CD8-positive, alpha-beta T cell (primary cell): ENCODE measurements at regions of chr11 and their contacts with region 1.

Region 1: DNA sequence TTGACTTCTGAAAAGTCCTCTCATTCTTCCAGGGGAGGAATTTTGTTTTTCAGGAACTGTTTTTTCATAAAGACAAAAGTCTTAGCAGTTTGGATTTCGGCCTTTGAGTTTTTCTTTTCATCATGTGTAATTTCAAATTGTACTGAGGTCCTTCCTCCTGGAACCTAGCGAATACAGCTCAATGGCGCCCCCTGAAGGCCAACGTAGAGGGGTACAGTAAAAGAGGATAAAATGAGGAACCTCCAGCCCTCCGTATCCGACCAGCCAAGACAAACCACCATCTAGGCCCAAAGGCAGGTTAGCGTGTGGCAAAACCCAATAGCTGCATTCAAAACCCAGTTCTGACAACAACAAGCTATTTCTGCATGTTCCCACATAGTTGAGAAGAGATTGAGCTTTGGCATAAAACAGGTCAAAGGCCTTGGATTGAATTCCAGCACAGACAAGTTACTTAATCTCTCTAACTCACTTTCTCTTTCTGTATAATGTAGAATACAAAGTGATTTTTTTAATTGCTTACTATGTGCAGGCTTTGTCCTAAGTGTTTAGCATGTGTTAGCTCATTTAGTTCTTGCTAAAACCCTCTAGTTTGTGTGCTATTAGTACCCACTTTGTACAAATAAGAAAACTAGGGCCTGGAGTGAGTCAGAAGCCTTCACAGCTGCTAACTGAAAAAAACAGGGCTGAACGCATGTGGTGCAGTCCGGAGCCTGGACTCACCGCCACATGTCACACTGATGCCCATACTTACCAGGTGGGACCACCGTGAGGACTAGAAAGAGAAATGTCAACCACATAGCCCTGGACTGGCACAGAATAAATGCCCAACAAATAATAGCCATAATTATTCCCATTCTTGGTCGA is 43.2 kb upstream of the ETS1 start:
- DNase-seq: peak; percentile 85 to 96 (median 93)
- ATAC-seq: peak; percentile 75
- H3K4me3 ChIP-seq: no peak overlapping the region
- H3K4me3 Mint-ChIP-seq: peak overlapping the region; percentile 61
- H3K27ac ChIP-seq: peak overlapping the region in 1 of 2 experiments; percentile 38
- H3K27ac Mint-ChIP-seq: peak overlapping the region; percentile 98
- H3K4me1 ChIP-seq: peaks cover 67% of the 10 kb centered on the region
- H3K4me1 Mint-ChIP-seq: peaks cover 65% of the 10 kb centered on the region
- H3K27me3 ChIP-seq: no peaks in the 10 kb centered on the region
- H3K27me3 Mint-ChIP-seq: no peaks in the 10 kb centered on the region
- CTCF ChIP-seq: peak; percentile 82

Region 2: GRCh38 chr11:128026596-128026995 is 604.0 kb before region 1 on chr11:
- CTCF ChIA-PET with region 1: interaction called, 11 read pairs
- POLR2A ChIA-PET with region 1: no interaction called
- intact Hi-C with region 1: loop called (anchors 1 kb)
- DNase-seq: no peak
- ATAC-seq: no peak
- H3K4me3 ChIP-seq: no peak overlapping the region
- H3K4me3 Mint-ChIP-seq: no peak overlapping the region
- H3K27ac ChIP-seq: no peak overlapping the region
- H3K27ac Mint-ChIP-seq: no peak overlapping the region
- H3K4me1 ChIP-seq: no peaks in the 10 kb centered on the region
- H3K4me1 Mint-ChIP-seq: peaks cover 2% of the 10 kb centered on the region
- H3K27me3 ChIP-seq: no peaks in the 10 kb centered on the region
- H3K27me3 Mint-ChIP-seq: peaks cover 5% of the 10 kb centered on the region
- CTCF ChIP-seq: no peak

Region 3: GRCh38 chr11:128290106-128290840 is 340.3 kb before region 1 on chr11:
- CTCF ChIA-PET with region 1: interaction called, 236 read pairs
- POLR2A ChIA-PET with region 1: interaction called, 21 read pairs
- intact Hi-C with region 1: loop called (anchors 1 kb)
- DNase-seq: peak; percentile 48 to 94 (median 71)
- ATAC-seq: peak; percentile 67
- H3K4me3 ChIP-seq: peak overlapping the region; percentile 46 to 51
- H3K4me3 Mint-ChIP-seq: peak overlapping the region; percentile 88
- H3K27ac ChIP-seq: peak overlapping the region; percentile 89 to 90
- H3K27ac Mint-ChIP-seq: peak overlapping the region; percentile 100
- H3K4me1 ChIP-seq: peaks cover 79% of the 10 kb centered on the region
- H3K4me1 Mint-ChIP-seq: peaks cover 92% of the 10 kb centered on the region
- H3K27me3 ChIP-seq: no peaks in the 10 kb centered on the region
- H3K27me3 Mint-ChIP-seq: no peaks in the 10 kb centered on the region
- CTCF ChIP-seq: peak; percentile 92

Region 4: DNA sequence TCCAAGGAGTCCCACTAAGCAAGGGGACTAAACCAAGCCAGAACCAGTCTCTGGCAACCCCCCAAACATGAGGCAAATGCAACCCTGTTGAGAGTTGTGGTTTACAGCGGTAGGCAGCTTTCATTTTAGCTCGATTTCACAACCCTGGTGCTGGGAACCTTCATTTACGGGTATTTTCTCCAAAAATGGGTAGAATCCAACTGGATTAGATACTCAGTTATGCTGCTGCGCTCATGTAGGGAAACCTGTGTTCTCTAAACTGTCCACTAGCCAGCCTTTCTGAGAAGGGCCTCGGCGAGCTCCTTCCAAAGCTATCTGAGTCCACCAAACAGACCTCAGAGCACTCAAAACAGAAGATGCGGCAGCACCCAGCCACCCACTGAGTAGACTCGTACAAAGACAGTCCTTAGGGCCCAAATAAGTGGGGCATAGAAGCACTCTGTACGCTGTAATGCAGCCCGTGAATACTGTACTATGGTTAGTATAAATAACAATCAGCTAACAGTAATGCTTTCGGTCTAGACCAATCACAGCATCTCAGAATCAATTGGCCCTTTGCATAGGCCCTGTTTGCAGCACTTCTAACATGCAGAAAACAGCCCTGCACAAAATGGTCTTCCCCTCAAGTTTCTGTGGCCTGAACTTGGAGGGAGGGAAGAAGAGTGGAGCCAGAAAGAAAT is 147.9 kb before region 1 on chr11:
- CTCF ChIA-PET with region 1: interaction called, 62 read pairs
- POLR2A ChIA-PET with region 1: interaction called, 3 read pairs
- intact Hi-C with region 1: no loop called
- DNase-seq: peak in 4 of 9 experiments; percentile 61 to 91 (median 82)
- ATAC-seq: peak; percentile 62
- H3K4me3 ChIP-seq: peak overlapping the region; percentile 26 to 40
- H3K4me3 Mint-ChIP-seq: peak overlapping the region; percentile 71
- H3K27ac ChIP-seq: peak overlapping the region; percentile 63 to 88
- H3K27ac Mint-ChIP-seq: peak overlapping the region; percentile 99
- H3K4me1 ChIP-seq: peaks cover 96% of the 10 kb centered on the region
- H3K4me1 Mint-ChIP-seq: peaks cover 96% of the 10 kb centered on the region
- H3K27me3 ChIP-seq: no peaks in the 10 kb centered on the region
- H3K27me3 Mint-ChIP-seq: no peaks in the 10 kb centered on the region
- CTCF ChIP-seq: no peak

Region 5: DNA sequence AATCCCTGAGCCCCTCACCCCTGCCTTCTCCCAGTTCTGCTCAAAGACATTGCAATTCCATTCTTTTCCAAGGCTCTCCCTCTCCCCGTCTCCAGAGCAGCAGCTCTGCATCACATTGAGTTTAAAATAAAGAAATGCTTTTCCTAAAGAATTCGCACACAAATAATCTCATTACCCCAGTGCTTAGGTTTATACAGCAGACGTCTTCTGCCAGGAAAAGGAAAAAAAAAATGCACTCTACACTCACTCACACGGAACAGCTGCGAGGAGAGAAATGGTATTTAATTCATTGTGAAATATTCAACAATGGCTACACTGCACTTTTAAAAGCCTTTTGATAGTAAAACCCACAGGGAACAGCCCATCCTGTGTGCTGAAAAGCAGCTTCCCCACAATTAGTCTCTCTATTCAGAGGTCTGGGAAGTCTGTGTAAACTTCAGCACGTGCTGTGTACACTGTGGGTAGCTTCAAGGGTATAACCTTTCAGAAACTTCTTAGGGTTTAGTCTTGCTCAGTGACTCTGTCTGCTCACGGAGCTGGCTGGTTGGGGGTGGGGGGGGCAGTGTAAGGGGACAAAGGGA is 86.0 kb before region 1 on chr11:
- CTCF ChIA-PET with region 1: interaction called, 11 read pairs
- POLR2A ChIA-PET with region 1: interaction called, 15 read pairs
- intact Hi-C with region 1: no loop called
- DNase-seq: peak in 3 of 9 experiments; percentile 26 to 51 (median 41)
- ATAC-seq: peak; percentile 68
- H3K4me3 ChIP-seq: peak overlapping the region in 1 of 2 experiments; percentile 4
- H3K4me3 Mint-ChIP-seq: peak overlapping the region; percentile 70
- H3K27ac ChIP-seq: no peak overlapping the region
- H3K27ac Mint-ChIP-seq: peak overlapping the region; percentile 87
- H3K4me1 ChIP-seq: peaks cover 50% of the 10 kb centered on the region
- H3K4me1 Mint-ChIP-seq: peaks cover 64% of the 10 kb centered on the region
- H3K27me3 ChIP-seq: no peaks in the 10 kb centered on the region
- H3K27me3 Mint-ChIP-seq: no peaks in the 10 kb centered on the region
- CTCF ChIP-seq: no peak

Region 6: GRCh38 chr11:128733440-128734102 is 103.0 kb after region 1 on chr11:
- CTCF ChIA-PET with region 1: interaction called, 14 read pairs
- POLR2A ChIA-PET with region 1: no interaction called
- intact Hi-C with region 1: no loop called
- DNase-seq: peak in 6 of 9 experiments; percentile 31 to 64 (median 50)
- ATAC-seq: peak; percentile 50
- H3K4me3 ChIP-seq: peak overlapping the region in 1 of 2 experiments; percentile 4
- H3K4me3 Mint-ChIP-seq: peak overlapping the region; percentile 76
- H3K27ac ChIP-seq: peak overlapping the region in 1 of 2 experiments; percentile 64
- H3K27ac Mint-ChIP-seq: peak overlapping the region; percentile 91
- H3K4me1 ChIP-seq: peaks cover 99% of the 10 kb centered on the region
- H3K4me1 Mint-ChIP-seq: peaks cover 99% of the 10 kb centered on the region
- H3K27me3 ChIP-seq: no peaks in the 10 kb centered on the region
- H3K27me3 Mint-ChIP-seq: no peaks in the 10 kb centered on the region
- CTCF ChIP-seq: no peak

Region 7: GRCh38 chr11:129950101-129951091 is 1319.8 kb after region 1 on chr11:
- CTCF ChIA-PET with region 1: no interaction called
- POLR2A ChIA-PET with region 1: no interaction called
- intact Hi-C with region 1: no loop called
- DNase-seq: no peak
- ATAC-seq: no peak
- H3K4me3 ChIP-seq: no peak overlapping the region
- H3K4me3 Mint-ChIP-seq: no peak overlapping the region
- H3K27ac ChIP-seq: no peak overlapping the region
- H3K27ac Mint-ChIP-seq: no peak overlapping the region
- H3K4me1 ChIP-seq: no peaks in the 10 kb centered on the region
- H3K4me1 Mint-ChIP-seq: no peaks in the 10 kb centered on the region
- H3K27me3 ChIP-seq: no peaks in the 10 kb centered on the region
- H3K27me3 Mint-ChIP-seq: no peaks in the 10 kb centered on the region
- CTCF ChIP-seq: no peak